A549 (cell line): ENCODE measurements at regions of chr7 and their contacts with region 1.

Region 1: DNA sequence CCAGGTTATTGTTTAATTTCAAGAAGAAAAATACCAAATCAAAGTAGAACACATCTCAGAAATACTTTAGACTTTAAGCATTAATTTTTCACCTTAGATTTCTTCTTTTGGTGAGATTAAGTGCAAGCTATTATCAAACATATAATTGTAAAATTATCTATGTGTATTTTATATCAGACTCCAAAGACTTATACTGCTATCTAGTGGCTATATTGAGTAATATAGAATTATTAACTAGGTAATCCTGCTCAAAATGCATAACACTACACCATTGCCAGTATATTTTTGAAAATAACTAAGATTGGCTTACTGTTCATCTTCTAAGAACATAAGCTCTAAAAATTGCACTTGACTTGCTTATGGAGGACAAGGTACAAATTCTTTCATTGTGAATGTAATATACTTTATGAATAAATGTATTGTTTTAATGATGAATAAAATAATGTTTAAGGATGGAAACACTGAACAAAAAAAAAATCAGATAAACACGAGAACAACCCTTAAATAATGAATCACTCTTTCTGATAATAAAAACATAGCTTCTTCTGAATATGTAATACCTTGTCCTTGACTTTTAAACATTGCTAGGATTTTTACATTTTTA is 86.7 kb upstream of the GNAI1 start:
- DNase-seq: peak in 1 of 2 experiments; percentile 10
- ATAC-seq: peak in 1 of 2 experiments; percentile 73; a peak in 2 of 6 replicates
- H3K4me3 ChIP-seq: no peak overlapping the region
- H3K27ac ChIP-seq: no peak overlapping the region
- H3K4me1 ChIP-seq: no peaks in the 10 kb centered on the region
- CTCF ChIP-seq: peak; percentile 63
- EP300 ChIP-seq: no peak
- POLR2A ChIP-seq: no peak
- RAD21 ChIP-seq: peak; percentile 66 to 83

Region 2: DNA sequence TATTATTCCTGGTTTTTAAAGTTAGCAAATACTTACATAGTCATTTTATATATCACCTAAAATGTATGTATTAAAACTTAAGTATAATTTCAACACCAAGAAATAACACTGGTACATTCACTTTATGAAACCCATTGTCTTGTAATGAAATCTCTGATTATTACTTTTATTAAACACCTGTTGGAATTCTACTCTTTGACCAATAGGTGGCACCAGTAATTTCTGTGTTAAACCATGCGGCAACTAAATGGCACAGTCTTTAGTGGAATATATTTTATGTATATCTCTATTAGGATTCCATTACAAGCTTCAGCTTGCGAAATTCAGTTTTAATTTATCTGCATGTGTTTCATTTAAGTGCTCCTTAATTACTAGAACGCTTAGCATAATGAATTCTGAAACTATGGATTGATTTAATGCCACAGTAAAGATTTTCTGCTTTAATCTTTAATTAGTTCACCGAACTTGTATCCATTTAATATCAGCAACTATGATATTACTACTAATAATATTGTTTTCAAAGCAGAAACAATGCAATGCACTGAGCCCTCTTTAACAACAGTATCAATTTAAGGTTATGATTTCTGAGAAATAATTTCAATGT is 775.8 kb before region 1 on chr7:
- CTCF ChIA-PET with region 1: interaction called, 14 read pairs
- POLR2A ChIA-PET with region 1: no interaction called
- DNase-seq: peak; percentile 18 to 63
- ATAC-seq: peak in 1 of 2 experiments; percentile 63; a peak in 3 of 6 replicates
- H3K4me3 ChIP-seq: no peak overlapping the region
- H3K27ac ChIP-seq: no peak overlapping the region
- H3K4me1 ChIP-seq: no peaks in the 10 kb centered on the region
- CTCF ChIP-seq: peak; percentile 81
- EP300 ChIP-seq: no peak
- POLR2A ChIP-seq: no peak
- RAD21 ChIP-seq: peak; percentile 75 to 76

Region 3: GRCh38 chr7:80027611-80028173 is 20.3 kb before region 1 on chr7:
- CTCF ChIA-PET with region 1: interaction called, 10 read pairs
- POLR2A ChIA-PET with region 1: no interaction called
- DNase-seq: no peak
- ATAC-seq: peak in 1 of 2 experiments; percentile 34; a peak in 1 of 6 replicates
- H3K4me3 ChIP-seq: no peak overlapping the region
- H3K27ac ChIP-seq: no peak overlapping the region
- H3K4me1 ChIP-seq: no peaks in the 10 kb centered on the region
- CTCF ChIP-seq: no peak
- EP300 ChIP-seq: no peak
- POLR2A ChIP-seq: no peak
- RAD21 ChIP-seq: no peak

Region 4: DNA sequence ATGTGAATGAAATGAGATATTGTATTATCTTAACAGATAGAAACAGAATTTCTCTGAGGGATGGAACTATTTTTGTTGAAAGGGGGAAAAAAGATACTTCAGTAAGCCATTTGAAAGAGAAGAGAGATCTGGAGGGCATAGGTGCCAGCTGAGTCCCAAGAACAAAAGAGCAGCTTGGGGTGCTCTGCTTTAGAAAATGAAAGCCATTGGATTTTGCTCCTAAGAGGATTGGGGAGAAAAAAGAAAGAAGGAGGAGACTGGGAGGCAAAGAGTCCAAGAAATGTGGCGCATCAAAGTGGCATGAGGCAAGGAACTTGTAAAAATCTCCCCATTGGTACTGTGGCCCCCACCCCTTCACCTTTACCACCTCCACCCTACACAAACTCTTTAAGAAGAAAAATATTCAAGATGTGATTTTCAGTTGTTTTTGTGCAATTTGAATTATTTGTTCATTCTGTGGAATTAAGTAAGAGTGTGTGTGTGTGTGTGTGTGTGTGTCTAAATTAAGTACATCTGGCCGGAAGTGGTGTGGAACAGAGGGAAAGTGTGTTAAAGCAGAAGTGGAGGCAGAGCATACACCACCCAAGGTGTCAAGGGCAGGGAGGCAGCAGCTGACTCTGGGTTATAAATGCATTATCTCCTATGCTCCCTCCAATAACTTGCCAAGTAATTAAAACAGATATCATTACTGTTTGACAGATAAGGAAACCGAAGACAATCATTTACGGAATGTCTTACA is 76.7 kb after region 1 on chr7:
- CTCF ChIA-PET with region 1: no interaction called
- POLR2A ChIA-PET with region 1: no interaction called
- DNase-seq: no peak
- ATAC-seq: no peak
- H3K4me3 ChIP-seq: no peak overlapping the region
- H3K27ac ChIP-seq: no peak overlapping the region
- H3K4me1 ChIP-seq: no peaks in the 10 kb centered on the region
- CTCF ChIP-seq: no peak
- EP300 ChIP-seq: no peak
- POLR2A ChIP-seq: no peak
- RAD21 ChIP-seq: no peak